IMR-90 (cell line): ENCODE measurements at regions of chr3 and their contacts with region 1.

Region 1: DNA sequence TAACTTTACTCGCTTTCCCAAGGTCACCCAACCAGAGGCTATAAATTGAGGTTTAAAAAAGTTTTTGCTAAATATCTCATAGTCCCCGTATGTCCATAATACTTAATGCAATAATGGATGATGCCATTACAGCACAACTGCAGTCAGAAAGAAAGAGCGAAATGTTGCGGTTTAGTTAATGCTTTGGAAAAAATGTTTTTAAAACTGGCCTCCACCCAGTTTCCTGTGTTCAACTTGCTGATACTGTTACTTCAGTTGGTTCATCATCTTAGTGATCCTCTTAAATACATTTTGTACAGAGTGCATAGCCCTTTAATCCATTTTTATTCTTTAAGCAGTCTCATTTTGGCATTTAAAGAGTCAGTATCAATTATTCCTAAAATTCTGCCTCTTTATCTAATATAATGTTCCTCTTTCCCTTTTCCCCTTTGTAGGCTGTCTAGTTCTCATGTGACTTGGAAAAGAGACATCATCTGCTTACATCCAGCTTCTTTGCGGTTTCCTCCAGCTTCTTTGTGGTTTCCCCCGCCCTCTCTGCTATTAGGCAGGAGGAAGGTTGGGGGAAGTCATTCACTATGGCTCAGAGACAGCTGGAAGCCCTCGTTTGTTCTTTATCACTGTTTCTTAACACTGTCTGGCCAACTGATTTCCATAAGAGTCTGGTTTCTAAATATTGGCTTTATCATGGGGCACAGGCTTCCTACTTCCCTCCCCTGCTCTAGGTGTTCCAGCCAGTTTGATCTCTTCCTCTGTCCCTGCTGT is 154.3 kb downstream of the GOLIM4 start:
- DNase-seq: peak; percentile 88
- ATAC-seq: peak; percentile 97
- H3K4me3 ChIP-seq: no peak overlapping the region
- H3K27ac ChIP-seq: no peak overlapping the region
- H3K4me1 ChIP-seq: peaks cover 5% of the 10 kb centered on the region
- H3K27me3 ChIP-seq: peaks cover 4% of the 10 kb centered on the region
- CTCF ChIP-seq: no peak
- POLR2A ChIP-seq: no peak
- RAD21 ChIP-seq: no peak

Region 2: DNA sequence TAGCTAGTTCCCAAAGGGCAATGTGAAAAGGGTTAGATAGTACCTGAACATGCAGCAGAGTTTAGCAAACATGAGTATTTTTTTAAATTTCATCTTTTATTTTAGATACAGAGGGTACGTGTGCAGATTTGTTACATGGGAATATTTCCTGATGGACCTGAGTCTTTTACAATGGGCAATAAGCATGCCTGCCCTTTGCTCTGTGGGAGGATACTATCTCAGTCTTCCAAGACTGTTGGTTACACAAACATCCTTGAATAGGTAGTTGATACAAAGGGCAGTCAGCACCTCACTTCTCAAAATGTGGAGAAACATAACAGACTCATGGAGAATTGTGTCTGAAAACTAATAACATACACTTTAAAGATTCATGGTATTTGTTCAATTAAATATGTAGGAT is 51.0 kb after region 1 on chr3:
- CTCF ChIA-PET with region 1: no interaction called
- POLR2A ChIA-PET with region 1: no interaction called
- dilution Hi-C with region 1: no loop called
- in situ Hi-C with region 1: no loop called
- intact Hi-C with region 1: no loop called
- DNase-seq: no peak
- ATAC-seq: no peak
- H3K4me3 ChIP-seq: no peak overlapping the region
- H3K27ac ChIP-seq: no peak overlapping the region
- H3K4me1 ChIP-seq: no peaks in the 10 kb centered on the region
- H3K27me3 ChIP-seq: peaks cover 1% of the 10 kb centered on the region; the same call in 1 of the 2 replicates
- CTCF ChIP-seq: no peak
- POLR2A ChIP-seq: no peak
- RAD21 ChIP-seq: no peak

Region 3: GRCh38 chr3:168034152-168034928 is 92.9 kb after region 1 on chr3:
- CTCF ChIA-PET with region 1: no interaction called
- POLR2A ChIA-PET with region 1: no interaction called
- dilution Hi-C with region 1: no loop called
- in situ Hi-C with region 1: no loop called
- intact Hi-C with region 1: loop called (anchors 5 kb)
- DNase-seq: peak; percentile 73
- ATAC-seq: peak; percentile 85
- H3K4me3 ChIP-seq: no peak overlapping the region
- H3K27ac ChIP-seq: no peak overlapping the region
- H3K4me1 ChIP-seq: peaks cover 3% of the 10 kb centered on the region; the same call in 1 of the 2 replicates
- H3K27me3 ChIP-seq: no peaks in the 10 kb centered on the region
- CTCF ChIP-seq: no peak
- POLR2A ChIP-seq: no peak
- RAD21 ChIP-seq: no peak

Region 4: GRCh38 chr3:168165390-168166269 is 224.2 kb after region 1 on chr3:
- CTCF ChIA-PET with region 1: no interaction called
- POLR2A ChIA-PET with region 1: no interaction called
- dilution Hi-C with region 1: no loop called
- in situ Hi-C with region 1: loop called (anchors 25 kb)
- intact Hi-C with region 1: no loop called
- DNase-seq: peak; percentile 76
- ATAC-seq: peak; percentile 96
- H3K4me3 ChIP-seq: no peak overlapping the region
- H3K27ac ChIP-seq: no peak overlapping the region
- H3K4me1 ChIP-seq: no peaks in the 10 kb centered on the region
- H3K27me3 ChIP-seq: no peaks in the 10 kb centered on the region
- CTCF ChIP-seq: peak; percentile 92
- POLR2A ChIP-seq: peak; percentile 39; the same call in 1 of the 2 replicates
- RAD21 ChIP-seq: peak; percentile 93